Activated T-helper 2 cell treated with anti-CD3 and anti-CD28 coated beads, Interferon-gamma antibody, Interleukin-2, Interleukin-4, amounts not matched to agents 10 μg/mL and 5 μg/mL and 100 μg/mL, durations not matched to agents 14 hours and 24 hours and 36 hours (primary cell): ENCODE measurements at regions of chr15 and their contacts with region 1.

Region 1: GRCh38 chr15:90412356-90413194 is 24.5 kb downstream of the IQGAP1 start:
- DNase-seq: no peak
- H3K4me3 Mint-ChIP-seq: peak overlapping the region; percentile 19
- H3K27ac Mint-ChIP-seq: peak overlapping the region; percentile 86
- H3K4me1 Mint-ChIP-seq: peaks cover 73% of the 10 kb centered on the region
- H3K27me3 Mint-ChIP-seq: no peaks in the 10 kb centered on the region

Region 2: GRCh38 chr15:90306560-90306959 is 106.0 kb before region 1 on chr15:
- intact Hi-C with region 1: loop called (anchors 5 kb)
- DNase-seq: peak; percentile 25
- H3K4me3 Mint-ChIP-seq: peak overlapping the region; percentile 55
- H3K27ac Mint-ChIP-seq: peak overlapping the region; percentile 84
- H3K4me1 Mint-ChIP-seq: peaks cover 41% of the 10 kb centered on the region
- H3K27me3 Mint-ChIP-seq: no peaks in the 10 kb centered on the region

Region 3: GRCh38 chr15:90376789-90377188 is 35.8 kb before region 1 on chr15:
- intact Hi-C with region 1: loop called (anchors 2 kb)
- DNase-seq: peak; percentile 69
- H3K4me3 Mint-ChIP-seq: peak overlapping the region; percentile 23
- H3K27ac Mint-ChIP-seq: peak overlapping the region; percentile 96
- H3K4me1 Mint-ChIP-seq: peaks cover 31% of the 10 kb centered on the region
- H3K27me3 Mint-ChIP-seq: no peaks in the 10 kb centered on the region

Region 4: DNA sequence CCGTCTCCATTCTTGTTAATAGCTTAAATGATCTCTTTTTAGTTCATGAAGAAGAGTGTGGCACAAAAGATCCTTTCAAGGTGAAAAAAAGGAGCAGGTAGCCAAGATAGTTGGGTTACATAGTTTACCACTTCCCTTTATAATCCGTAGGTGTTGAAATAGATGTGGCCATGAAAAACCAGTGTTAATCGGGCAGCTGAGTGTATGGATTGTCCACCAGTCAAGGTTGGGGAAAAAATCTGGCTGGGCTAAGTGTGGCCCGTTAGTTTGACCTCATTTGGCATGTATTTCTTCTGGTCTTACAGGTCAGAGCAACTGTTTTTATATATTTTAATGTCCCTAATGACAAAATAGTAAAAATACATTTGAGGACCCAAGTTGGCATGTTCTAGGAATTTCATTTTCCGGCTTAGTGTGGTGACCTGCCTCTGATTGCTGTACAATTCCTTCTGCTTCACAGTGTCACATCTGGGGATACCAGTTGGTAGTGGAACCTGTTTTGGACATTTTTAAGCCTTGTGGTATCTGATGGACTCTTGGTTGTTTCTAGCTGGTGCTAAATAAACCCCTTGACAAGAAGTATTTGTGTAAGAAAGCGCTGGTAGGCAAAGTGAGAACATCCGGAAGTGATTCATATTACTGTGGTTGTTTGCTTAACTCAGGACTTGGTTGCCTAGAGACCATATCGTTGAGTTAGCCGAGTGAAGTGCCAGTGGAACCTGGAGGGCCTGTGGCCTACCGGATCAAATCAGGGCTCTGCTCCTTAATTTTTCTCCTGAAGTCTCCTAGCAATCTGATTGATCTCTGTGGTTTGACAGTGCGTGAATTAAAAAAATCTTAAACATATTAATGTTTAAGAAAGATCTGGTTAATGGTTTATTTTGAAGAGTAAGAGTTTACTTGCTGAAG is 11.9 kb before region 1 on chr15:
- intact Hi-C with region 1: loop called (anchors 1 kb)
- DNase-seq: peak; percentile 70
- H3K4me3 Mint-ChIP-seq: peak overlapping the region; percentile 68
- H3K27ac Mint-ChIP-seq: peak overlapping the region; percentile 93
- H3K4me1 Mint-ChIP-seq: peaks cover 54% of the 10 kb centered on the region
- H3K27me3 Mint-ChIP-seq: no peaks in the 10 kb centered on the region

Region 5: DNA sequence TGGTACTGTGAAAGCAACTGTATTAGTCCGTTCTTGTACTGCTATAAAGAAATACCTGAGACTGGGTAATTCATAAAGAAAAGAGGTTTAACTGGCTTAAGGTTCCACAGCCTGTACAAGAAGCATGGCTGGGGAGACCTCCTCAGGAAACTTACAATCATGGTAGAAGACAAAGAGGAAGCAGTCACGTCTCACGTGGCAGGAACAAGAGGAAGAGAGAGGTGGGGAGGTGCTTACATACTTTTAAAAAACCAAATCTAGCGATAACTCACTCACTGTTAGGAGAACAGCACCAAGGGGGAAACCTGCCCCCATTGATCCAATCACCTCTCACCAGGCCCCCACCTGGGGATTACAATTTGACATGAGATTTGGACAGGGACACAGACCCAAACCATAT is 24.4 kb after region 1 on chr15:
- intact Hi-C with region 1: no loop called
- DNase-seq: no peak
- H3K4me3 Mint-ChIP-seq: no peak overlapping the region
- H3K27ac Mint-ChIP-seq: no peak overlapping the region
- H3K4me1 Mint-ChIP-seq: peaks cover 17% of the 10 kb centered on the region
- H3K27me3 Mint-ChIP-seq: no peaks in the 10 kb centered on the region

Region 6: GRCh38 chr15:90482124-90483011 is 69.8 kb after region 1 on chr15:
- intact Hi-C with region 1: loop called (anchors 5 kb)
- DNase-seq: no peak
- H3K4me3 Mint-ChIP-seq: no peak overlapping the region
- H3K27ac Mint-ChIP-seq: no peak overlapping the region
- H3K4me1 Mint-ChIP-seq: peaks cover 35% of the 10 kb centered on the region
- H3K27me3 Mint-ChIP-seq: no peaks in the 10 kb centered on the region

Region 7: DNA sequence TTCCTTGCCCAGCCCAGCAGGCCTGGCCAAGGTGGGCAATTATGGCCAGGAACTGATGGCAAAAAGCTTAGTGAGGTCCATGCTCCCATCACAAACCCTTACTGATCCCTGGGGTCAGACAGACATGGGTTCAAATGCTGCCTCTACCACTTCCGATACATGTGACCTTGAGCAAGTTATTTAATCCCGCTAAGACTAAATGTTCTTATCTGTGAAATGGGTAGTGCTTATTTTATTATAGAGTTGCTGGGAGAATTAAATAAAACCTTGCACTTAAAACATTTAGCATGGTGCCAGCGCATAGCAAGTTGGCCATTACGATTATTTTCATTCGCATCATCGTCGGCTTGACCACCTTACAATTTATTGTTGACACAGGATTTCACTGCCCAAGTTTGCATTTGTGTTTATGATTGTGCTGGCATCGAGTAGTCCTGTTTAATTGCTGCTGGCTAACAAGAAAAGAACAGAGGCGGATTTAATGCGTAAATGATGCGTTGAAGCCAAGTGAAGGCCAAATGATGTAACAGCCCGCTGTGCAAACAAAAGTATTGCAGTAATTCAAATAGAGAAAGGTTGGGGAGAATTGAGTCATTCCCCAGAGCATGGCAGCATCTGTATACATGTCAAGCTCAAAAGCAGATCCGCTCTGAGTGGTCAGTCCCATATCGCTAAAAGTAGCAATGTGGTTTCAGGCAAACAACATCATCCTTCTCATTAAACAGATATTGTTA is 448.5 kb after region 1 on chr15:
- intact Hi-C with region 1: loop called (anchors 10 kb)
- DNase-seq: no peak
- H3K4me3 Mint-ChIP-seq: no peak overlapping the region
- H3K27ac Mint-ChIP-seq: no peak overlapping the region
- H3K4me1 Mint-ChIP-seq: peaks cover 55% of the 10 kb centered on the region
- H3K27me3 Mint-ChIP-seq: no peaks in the 10 kb centered on the region